Activated CD4-positive, alpha-beta T cell treated with anti-CD3 and anti-CD28 coated beads for 36 hours (primary cell): ENCODE measurements at regions of chr9 and their contacts with region 1.

Region 1: DNA sequence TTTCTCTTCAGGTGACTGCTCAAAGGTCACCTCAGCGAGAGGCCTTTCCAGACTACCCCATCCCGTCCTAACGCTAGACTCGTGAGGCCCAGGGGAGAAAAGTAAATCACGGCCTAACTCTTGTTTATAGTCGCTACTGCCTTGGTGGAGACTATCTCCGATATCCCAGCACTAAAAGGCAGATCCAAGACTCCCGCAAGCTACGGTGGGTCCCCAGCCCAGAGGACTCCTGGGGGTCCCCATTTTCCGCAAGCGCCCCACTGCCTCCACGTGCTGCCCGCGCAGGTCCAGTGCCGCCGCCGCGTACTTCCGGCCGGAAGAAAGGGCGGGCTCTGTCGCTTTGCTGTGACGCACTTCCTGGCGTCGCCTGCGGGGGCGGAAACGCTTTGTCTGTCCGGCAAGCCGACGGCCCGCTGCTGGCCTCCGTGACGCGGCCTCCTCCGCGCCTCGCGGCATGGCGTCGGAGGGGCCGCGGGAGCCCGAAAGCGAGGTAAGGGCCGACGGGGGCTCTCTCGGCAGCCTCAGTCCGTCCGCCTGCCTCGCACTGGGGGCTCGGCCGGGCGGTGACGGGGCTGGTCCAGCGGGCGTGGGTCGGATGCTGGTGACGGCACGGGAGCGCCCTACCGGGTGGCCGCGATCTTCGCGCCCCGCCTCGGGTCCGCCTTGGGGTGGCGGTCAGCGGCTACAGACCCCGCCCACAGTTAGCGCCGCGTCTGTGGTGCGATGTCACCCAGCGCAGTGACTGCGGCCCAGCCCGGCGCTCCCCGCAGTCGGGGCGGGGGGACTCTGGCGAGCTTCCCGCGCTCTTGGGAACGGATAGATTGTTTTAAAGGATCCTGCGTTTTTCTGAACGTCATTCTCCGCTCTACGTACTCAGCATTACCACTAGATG is at the start of gene SECISBP2:
- DNase-seq: peak; percentile 97
- ATAC-seq: peak; percentile 90
- H3K4me3 Mint-ChIP-seq: peak within 1 kb of the TSS; percentile 82
- H3K27ac Mint-ChIP-seq: peak within 1 kb of the TSS; percentile 98
- H3K4me1 Mint-ChIP-seq: peaks cover 79% of the 10 kb centered on the region
- H3K27me3 Mint-ChIP-seq: no peaks in the 10 kb centered on the region
- total RNA-seq, gene SECISBP2: 38.6 to 49.9 TPM

Region 2: GRCh38 chr9:89340332-89340731 is 22.0 kb after region 1 on chr9:
- CTCF ChIA-PET with region 1: interaction called, 4 read pairs
- POLR2A ChIA-PET with region 1: interaction called, 3 read pairs
- intact Hi-C with region 1: loop called (anchors 1 to 2 kb)
- DNase-seq: no peak
- ATAC-seq: peak; percentile 94
- H3K4me3 Mint-ChIP-seq: no peak overlapping the region
- H3K27ac Mint-ChIP-seq: peak overlapping the region; percentile 66
- H3K4me1 Mint-ChIP-seq: peaks cover 53% of the 10 kb centered on the region
- H3K27me3 Mint-ChIP-seq: no peaks in the 10 kb centered on the region

Region 3: DNA sequence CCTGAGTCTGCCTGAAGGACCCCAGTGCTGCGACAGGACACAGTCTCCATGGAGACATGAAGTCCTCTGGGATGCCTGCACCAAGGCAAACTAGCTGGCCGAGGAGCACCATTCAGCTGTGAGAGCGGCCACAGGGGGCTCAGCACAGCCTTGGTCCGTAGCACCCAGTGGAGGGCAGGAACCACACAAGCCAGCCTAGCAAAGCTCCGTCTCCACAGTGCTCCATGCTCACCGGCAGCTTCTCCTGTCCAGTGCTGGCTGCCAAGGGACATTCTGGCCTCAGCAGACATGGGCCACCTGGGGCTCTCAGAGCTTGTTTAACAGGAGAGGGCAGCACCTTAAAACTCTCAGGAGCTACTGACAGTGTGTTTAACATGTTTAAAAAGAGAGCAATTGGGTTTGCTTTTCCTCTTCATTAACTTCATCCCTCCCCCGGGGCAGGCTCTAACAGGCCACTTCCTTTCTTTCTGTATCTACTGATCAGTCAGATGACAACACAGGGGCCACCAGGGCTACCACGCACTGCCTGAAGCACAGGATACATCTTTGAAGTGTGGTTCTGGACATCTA is 56.9 kb after region 1 on chr9:
- CTCF ChIA-PET with region 1: no interaction called
- POLR2A ChIA-PET with region 1: no interaction called
- intact Hi-C with region 1: no loop called
- DNase-seq: no peak
- ATAC-seq: peak; percentile 33
- H3K4me3 Mint-ChIP-seq: no peak overlapping the region
- H3K27ac Mint-ChIP-seq: peak overlapping the region; percentile 78
- H3K4me1 Mint-ChIP-seq: peaks cover 25% of the 10 kb centered on the region
- H3K27me3 Mint-ChIP-seq: no peaks in the 10 kb centered on the region

Region 4: DNA sequence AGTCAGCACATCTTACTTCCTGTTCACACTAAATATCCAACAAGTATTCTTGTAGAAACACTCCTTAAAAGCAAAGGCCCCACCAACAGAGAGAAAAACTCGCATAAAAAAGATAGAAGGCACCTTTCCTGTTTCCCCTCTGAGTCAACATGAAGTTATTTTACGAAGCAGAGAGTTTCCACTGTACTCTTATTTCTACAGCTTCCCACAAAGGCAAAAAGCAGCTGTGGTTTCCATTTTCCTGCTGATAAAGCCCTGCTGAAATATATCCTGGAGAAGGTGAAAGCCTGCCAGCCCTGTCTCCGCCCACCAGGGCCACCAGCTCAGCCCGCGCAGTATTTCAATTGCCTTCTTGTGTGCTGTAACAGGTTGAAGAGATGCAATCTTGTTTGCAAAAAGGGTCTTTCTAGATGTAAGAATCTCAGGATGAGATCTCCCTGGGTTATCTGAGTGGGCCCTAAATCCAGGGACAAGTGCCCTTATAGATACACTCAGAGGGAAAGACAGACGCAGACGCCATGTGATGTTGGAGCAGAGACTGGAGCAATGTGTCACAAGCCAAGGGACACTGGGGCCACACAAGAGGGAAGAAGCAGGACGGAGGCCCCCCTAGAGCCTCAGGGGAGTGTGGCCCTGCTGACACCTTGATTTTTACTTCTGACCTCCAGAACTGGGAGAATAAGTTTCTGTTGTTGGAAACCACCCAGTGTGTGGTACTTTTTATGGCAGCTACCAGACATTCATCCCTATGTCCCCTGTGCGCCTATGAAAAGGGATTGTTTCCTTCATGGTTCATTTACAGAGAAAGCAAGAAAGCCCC is 159.7 kb after region 1 on chr9:
- CTCF ChIA-PET with region 1: interaction called, 4 read pairs
- POLR2A ChIA-PET with region 1: interaction called, 7 read pairs
- intact Hi-C with region 1: loop called in 1 of 2 experiments (anchors 2 kb)
- DNase-seq: peak; percentile 79
- ATAC-seq: peak; percentile 43
- H3K4me3 Mint-ChIP-seq: peak overlapping the region; percentile 92
- H3K27ac Mint-ChIP-seq: peak overlapping the region; percentile 99
- H3K4me1 Mint-ChIP-seq: peaks cover 94% of the 10 kb centered on the region
- H3K27me3 Mint-ChIP-seq: no peaks in the 10 kb centered on the region

Region 5: GRCh38 chr9:89522261-89522958 is 204.0 kb after region 1 on chr9:
- CTCF ChIA-PET with region 1: no interaction called
- POLR2A ChIA-PET with region 1: no interaction called
- intact Hi-C with region 1: loop called in 1 of 2 experiments (anchors 10 kb)
- DNase-seq: peak; percentile 86
- ATAC-seq: peak; percentile 90
- H3K4me3 Mint-ChIP-seq: peak overlapping the region; percentile 62
- H3K27ac Mint-ChIP-seq: peak overlapping the region; percentile 97
- H3K4me1 Mint-ChIP-seq: peaks cover 94% of the 10 kb centered on the region
- H3K27me3 Mint-ChIP-seq: no peaks in the 10 kb centered on the region

Region 6: DNA sequence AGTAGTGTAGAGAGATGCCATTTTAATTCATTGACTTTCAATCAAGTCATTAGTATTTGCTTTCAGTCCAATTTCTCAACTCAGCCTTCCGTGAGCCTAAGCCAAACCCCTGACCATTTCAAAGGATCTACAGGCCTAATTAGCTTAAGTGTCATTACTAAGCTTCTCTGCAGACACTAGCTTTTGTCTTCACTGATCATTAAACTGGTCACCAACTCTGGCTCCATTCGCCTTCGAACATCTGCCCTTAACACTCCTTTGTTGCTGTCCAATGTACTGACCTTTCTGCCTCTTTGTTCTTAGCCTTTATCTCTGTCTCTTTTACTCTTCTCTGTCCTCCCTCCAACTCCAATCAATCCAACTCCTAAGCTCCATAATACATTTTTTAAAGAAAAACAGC is 1025.0 kb after region 1 on chr9:
- CTCF ChIA-PET with region 1: no interaction called
- POLR2A ChIA-PET with region 1: no interaction called
- intact Hi-C with region 1: no loop called
- DNase-seq: no peak
- ATAC-seq: no peak
- H3K4me3 Mint-ChIP-seq: no peak overlapping the region
- H3K27ac Mint-ChIP-seq: no peak overlapping the region
- H3K4me1 Mint-ChIP-seq: peaks cover 3% of the 10 kb centered on the region
- H3K27me3 Mint-ChIP-seq: peaks cover 39% of the 10 kb centered on the region

Region 7: DNA sequence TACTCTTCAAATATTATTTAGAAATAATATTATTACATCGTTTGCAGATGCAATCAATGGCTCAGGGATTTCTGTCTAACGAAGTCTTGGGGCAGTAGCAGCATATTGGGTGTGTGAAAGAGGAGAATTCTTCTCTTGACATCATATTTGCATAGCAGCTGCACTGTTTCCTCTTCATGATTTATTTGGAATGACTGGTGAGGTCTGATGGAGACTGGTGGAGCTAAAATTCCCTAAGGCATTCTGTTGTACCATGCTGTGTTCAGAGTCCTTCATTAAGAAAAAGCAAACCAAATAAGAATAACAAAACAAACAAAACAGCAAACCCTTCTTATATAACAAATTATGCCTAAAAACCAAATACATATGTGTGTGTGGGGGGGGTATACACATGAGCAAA is 1146.6 kb after region 1 on chr9:
- CTCF ChIA-PET with region 1: no interaction called
- POLR2A ChIA-PET with region 1: no interaction called
- intact Hi-C with region 1: no loop called
- DNase-seq: no peak
- ATAC-seq: no peak
- H3K4me3 Mint-ChIP-seq: no peak overlapping the region
- H3K27ac Mint-ChIP-seq: no peak overlapping the region
- H3K4me1 Mint-ChIP-seq: no peaks in the 10 kb centered on the region
- H3K27me3 Mint-ChIP-seq: peaks cover 8% of the 10 kb centered on the region